Posterior vena cava (tissue), 2 donors: ENCODE measurements at regions of chr1 and their contacts with region 1.

Region 1: DNA sequence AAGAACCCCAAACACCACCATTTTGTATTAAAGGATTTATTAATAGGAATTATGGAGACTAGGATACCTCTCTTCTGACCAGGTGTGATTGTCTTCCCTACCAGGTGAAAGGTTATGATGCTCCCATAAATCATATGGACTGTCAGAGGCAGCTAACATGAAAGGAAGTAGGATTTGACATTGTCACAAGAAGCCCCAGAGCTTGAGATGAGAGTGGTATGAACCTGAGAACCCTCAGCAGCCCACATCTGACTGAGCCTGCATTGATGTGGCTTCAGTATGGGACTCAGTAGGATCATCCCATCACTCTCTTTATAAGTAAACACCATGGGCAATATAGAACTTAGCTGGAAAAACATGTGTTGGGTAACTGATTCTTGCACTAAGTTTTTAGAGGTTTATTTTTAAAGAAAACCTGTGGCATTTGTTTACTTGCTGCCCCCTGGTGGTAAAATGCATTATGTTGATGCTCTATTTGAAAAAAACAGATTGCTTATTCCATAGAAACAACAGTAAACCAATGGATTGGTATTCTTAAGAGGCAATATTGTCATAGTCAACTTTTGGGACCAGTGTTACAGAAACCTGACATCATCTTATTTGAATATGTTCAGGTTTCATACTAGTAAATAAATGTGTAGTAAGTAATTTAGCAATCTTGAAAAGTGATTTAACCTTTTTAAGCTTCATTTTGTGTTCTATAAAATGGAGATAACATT is 16.6 kb upstream of the CACYBP start:
- DNase-seq: no peak

Region 2: GRCh38 chr1:174769961-174770549 is 213.1 kb before region 1 on chr1:
- intact Hi-C with region 1: loop called (anchors 10 kb)
- DNase-seq: no peak

Region 3: DNA sequence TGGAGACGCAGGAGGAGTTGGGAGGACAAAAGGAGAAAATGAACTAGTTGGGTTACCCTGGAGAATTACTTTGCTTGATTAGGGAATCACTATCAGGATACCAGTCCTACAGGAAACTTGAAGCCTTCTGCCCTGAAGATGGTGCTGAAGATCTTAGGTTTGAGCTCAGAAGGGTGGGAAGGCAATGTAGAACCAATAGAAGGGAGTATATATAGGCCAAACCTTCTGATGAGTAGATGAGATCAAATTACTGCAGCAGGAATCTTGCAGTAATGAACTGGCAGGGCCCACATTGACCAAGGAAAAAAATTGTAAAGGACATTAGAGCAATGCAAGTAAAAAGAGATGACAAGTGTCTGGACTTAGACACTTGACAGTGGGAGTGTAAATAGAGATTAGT is 99.7 kb before region 1 on chr1:
- intact Hi-C with region 1: no loop called
- DNase-seq: no peak